Transverse colon (tissue), 4 donors: ENCODE measurements at regions of chr10 and their contacts with region 1.

Region 1: GRCh38 chr10:61845950-61846268 is 55.6 kb upstream of the ARID5B start:
- DNase-seq: no peak
- H3K4me3 ChIP-seq: no peak overlapping the region
- H3K27ac ChIP-seq: peak overlapping the region; percentile 28 to 71 (median 45)
- H3K4me1 ChIP-seq: peaks cover 9 to 30% (median 16%) of the 10 kb centered on the region in 4 donors
- H3K27me3 ChIP-seq: no peaks in the 10 kb centered on the region
- CTCF ChIP-seq: no peak
- EP300 ChIP-seq: no peak
- POLR2A ChIP-seq: no peak

Region 2: GRCh38 chr10:61804414-61804813 is 41.5 kb before region 1 on chr10:
- in situ Hi-C with region 1: no loop called
- intact Hi-C with region 1: loop called (anchors 1 kb)
- DNase-seq: no peak
- H3K4me3 ChIP-seq: no peak overlapping the region
- H3K27ac ChIP-seq: no peak overlapping the region
- H3K4me1 ChIP-seq: no peaks in the 10 kb centered on the region
- H3K27me3 ChIP-seq: no peaks in the 10 kb centered on the region
- CTCF ChIP-seq: no peak
- EP300 ChIP-seq: no peak
- POLR2A ChIP-seq: no peak

Region 3: GRCh38 chr10:62471711-62472110 is 625.8 kb after region 1 on chr10:
- in situ Hi-C with region 1: no loop called
- intact Hi-C with region 1: no loop called
- DNase-seq: no peak
- H3K4me3 ChIP-seq: no peak overlapping the region
- H3K27ac ChIP-seq: no peak overlapping the region
- H3K4me1 ChIP-seq: no peaks in the 10 kb centered on the region
- H3K27me3 ChIP-seq: no peaks in the 10 kb centered on the region
- CTCF ChIP-seq: no peak
- EP300 ChIP-seq: no peak
- POLR2A ChIP-seq: no peak